Vagina (tissue), 2 donors: ENCODE measurements at regions of chr7 and their contacts with region 1.

Region 1: GRCh38 chr7:152910545-152911225 is 151.1 kb downstream of the ACTR3B start:
- DNase-seq: no peak
- H3K4me3 ChIP-seq: no peak overlapping the region
- H3K27ac ChIP-seq: no peak overlapping the region
- H3K4me1 ChIP-seq: no peaks in the 10 kb centered on the region
- H3K27me3 ChIP-seq: no peaks in the 10 kb centered on the region
- CTCF ChIP-seq: no peak
- POLR2A ChIP-seq: no peak

Region 2: GRCh38 chr7:152947686-152948085 is 37.0 kb after region 1 on chr7:
- intact Hi-C with region 1: loop called (anchors 1 kb)
- DNase-seq: no peak
- H3K4me3 ChIP-seq: no peak overlapping the region
- H3K27ac ChIP-seq: no peak overlapping the region
- H3K4me1 ChIP-seq: no peaks in the 10 kb centered on the region
- H3K27me3 ChIP-seq: no peaks in the 10 kb centered on the region
- CTCF ChIP-seq: no peak
- POLR2A ChIP-seq: no peak